ENCODE measurements at regions of chr11 and their contacts with region 1.

Region 1: GRCh38 chr11:57741132-57742086 is at the start of gene SELENOH:
- DNase-seq: peak; percentile 98
- H3K4me3 Mint-ChIP-seq: peak within 1 kb of the TSS; percentile 97
- H3K27ac Mint-ChIP-seq: peak within 1 kb of the TSS; percentile 99
- H3K4me1 Mint-ChIP-seq: peaks cover 40% of the 10 kb centered on the region
- H3K27me3 Mint-ChIP-seq: no peaks in the 10 kb centered on the region
- total RNA-seq, gene SELENOH: 235 to 252 TPM

Region 2: GRCh38 chr11:57324886-57325734 is 416.3 kb before region 1 on chr11 and contains the start of gene TNKS1BP1:
- CTCF ChIA-PET with region 1: no interaction called
- POLR2A ChIA-PET with region 1: no interaction called
- intact Hi-C with region 1: loop called (anchors 5 kb)
- DNase-seq: peak; percentile 95
- H3K4me3 Mint-ChIP-seq: peak within 1 kb of the TSS; percentile 79
- H3K27ac Mint-ChIP-seq: peak within 1 kb of the TSS; percentile 95
- H3K4me1 Mint-ChIP-seq: peaks cover 42% of the 10 kb centered on the region
- H3K27me3 Mint-ChIP-seq: no peaks in the 10 kb centered on the region
- total RNA-seq, gene TNKS1BP1: 14.0 to 15.1 TPM

Region 3: GRCh38 chr11:57567515-57568329 is 173.7 kb before region 1 on chr11 and contains the start of gene UBE2L6:
- CTCF ChIA-PET with region 1: no interaction called
- POLR2A ChIA-PET with region 1: no interaction called
- intact Hi-C with region 1: loop called (anchors 1 kb)
- DNase-seq: peak; percentile 70
- H3K4me3 Mint-ChIP-seq: peak within 1 kb of the TSS; percentile 92
- H3K27ac Mint-ChIP-seq: peak within 1 kb of the TSS; percentile 98
- H3K4me1 Mint-ChIP-seq: peaks cover 31% of the 10 kb centered on the region
- H3K27me3 Mint-ChIP-seq: no peaks in the 10 kb centered on the region
- total RNA-seq, gene UBE2L6: 152 to 162 TPM

Region 4: DNA sequence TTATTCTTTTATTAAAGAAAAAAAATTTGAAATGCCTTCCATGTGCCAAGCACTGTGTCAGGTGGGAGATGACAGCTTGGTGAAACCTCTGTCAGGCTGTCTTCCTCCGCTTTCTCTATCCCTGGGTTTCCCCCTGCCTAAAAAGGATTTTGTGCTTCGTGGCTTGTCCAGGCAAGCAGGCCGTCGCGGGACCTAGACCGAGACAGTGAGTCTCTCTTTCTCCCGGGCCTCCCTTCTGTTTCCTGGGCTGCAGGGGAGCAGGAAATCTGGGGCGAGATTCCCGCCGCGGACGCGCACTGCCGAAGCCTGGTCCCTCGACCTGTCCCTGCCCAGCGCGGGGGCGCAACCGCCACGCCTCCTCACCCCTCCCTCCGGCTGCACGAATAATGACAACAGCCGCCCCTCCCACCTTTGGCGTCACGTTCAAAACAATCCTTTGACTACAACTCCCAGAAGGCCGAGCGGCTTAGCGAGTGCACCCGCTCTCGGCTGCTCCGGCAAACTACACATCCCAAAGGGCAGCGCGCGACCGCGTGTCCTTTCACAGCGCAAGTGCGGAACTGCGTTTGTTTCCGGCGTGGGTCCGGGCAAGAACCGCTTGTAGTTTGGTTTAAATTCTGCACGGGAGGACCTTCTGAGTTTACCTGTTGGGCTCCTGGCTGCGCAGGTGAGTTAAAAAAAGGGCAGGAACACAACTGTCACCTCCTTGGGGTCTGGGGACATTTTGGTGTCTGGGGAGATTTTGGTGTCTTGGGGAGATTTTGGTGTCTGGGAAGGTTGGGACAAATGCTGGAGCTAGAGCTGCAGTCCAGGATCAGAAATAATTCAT is 84.0 kb before region 1 on chr11 and contains the start of gene CLP1:
- CTCF ChIA-PET with region 1: no interaction called
- POLR2A ChIA-PET with region 1: no interaction called
- intact Hi-C with region 1: loop called (anchors 1 kb)
- DNase-seq: peak; percentile 100
- H3K4me3 Mint-ChIP-seq: peak within 1 kb of the TSS; percentile 100
- H3K27ac Mint-ChIP-seq: peak within 1 kb of the TSS; percentile 94
- H3K4me1 Mint-ChIP-seq: peaks cover 33% of the 10 kb centered on the region
- H3K27me3 Mint-ChIP-seq: no peaks in the 10 kb centered on the region
- total RNA-seq, gene CLP1: 13.9 to 15.2 TPM

Region 5: DNA sequence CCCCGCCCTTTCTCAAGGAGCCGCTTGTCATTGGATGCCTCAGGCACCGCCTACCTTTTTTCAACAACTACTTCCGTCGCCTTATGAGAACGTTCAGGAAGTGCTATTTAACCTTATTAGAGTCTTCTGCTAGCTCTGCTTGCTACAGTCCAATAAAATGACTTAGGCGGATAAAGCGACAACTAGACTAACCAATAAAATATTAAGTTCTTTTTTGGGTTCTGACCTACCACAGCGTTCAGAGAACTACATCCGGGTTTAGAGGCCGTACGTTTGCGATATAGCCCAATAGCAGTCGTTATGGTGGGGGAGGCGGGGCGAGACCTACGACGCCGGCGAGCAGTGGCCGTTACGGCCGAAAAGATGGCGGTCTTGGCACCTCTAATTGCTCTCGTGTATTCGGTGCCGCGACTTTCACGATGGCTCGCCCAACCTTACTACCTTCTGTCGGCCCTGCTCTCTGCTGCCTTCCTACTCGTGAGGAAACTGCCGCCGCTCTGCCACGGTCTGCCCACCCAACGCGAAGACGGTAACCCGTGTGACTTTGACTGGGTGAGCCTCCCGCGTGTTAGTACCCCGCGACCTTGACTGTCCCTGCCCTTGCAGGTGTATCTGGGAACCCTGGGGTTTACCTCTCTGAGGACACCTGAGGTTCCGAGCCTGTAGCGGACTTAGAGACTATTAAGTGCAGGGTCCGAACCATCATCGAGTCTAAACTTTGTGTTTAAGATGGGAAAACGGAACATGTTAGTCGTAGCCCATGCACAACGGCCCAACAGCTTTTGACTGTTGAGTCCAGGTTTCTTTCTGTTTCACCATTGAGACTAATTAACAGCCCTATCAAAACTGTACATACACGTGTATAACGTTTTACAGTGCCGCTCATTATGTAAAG is 28.9 kb before region 1 on chr11 and contains the start of gene TMX2:
- CTCF ChIA-PET with region 1: interaction called, 5 read pairs
- POLR2A ChIA-PET with region 1: interaction called, 12 read pairs
- intact Hi-C with region 1: loop called (anchors 1 kb)
- DNase-seq: peak; percentile 94
- H3K4me3 Mint-ChIP-seq: peak within 1 kb of the TSS; percentile 94
- H3K27ac Mint-ChIP-seq: peak within 1 kb of the TSS; percentile 89
- H3K4me1 Mint-ChIP-seq: peaks cover 53% of the 10 kb centered on the region
- H3K27me3 Mint-ChIP-seq: no peaks in the 10 kb centered on the region
- total RNA-seq, gene TMX2: 54.9 to 57.2 TPM

Region 6: DNA sequence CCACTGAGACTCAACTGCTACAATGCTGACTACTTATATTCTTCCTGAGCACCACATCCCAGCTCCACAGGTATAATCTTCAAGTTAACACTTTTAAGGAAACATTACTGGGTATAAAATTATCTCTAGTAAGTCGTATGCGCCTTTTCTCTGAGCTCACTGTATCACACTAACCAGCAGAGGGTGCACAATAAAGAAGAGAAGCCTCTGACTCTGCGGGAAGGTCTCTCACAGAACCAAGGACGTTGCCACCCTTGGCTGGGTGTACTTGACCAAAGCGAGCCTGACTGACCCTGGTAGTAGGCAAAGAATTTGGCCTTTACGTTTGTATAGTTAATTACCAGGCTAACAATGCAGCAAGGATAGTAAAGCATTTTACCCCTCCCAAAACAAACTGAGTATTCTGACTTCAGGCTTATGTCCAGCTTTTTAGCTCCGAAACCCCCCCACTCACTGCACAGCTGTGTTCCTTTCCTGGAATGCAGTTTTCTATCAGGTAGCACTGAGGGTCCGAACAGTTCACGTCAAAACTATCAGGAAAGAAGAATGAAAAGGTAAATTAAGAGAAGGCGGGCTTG is 10.4 kb after region 1 on chr11 and contains the start of gene BTBD18:
- CTCF ChIA-PET with region 1: interaction called, 4 read pairs
- POLR2A ChIA-PET with region 1: interaction called, 12 read pairs
- intact Hi-C with region 1: no loop called
- DNase-seq: no peak
- H3K4me3 Mint-ChIP-seq: no peak within 1 kb of the TSS
- H3K27ac Mint-ChIP-seq: no peak within 1 kb of the TSS
- H3K4me1 Mint-ChIP-seq: peaks cover 5% of the 10 kb centered on the region
- H3K27me3 Mint-ChIP-seq: no peaks in the 10 kb centered on the region
- total RNA-seq, gene BTBD18: not detected

Region 7: DNA sequence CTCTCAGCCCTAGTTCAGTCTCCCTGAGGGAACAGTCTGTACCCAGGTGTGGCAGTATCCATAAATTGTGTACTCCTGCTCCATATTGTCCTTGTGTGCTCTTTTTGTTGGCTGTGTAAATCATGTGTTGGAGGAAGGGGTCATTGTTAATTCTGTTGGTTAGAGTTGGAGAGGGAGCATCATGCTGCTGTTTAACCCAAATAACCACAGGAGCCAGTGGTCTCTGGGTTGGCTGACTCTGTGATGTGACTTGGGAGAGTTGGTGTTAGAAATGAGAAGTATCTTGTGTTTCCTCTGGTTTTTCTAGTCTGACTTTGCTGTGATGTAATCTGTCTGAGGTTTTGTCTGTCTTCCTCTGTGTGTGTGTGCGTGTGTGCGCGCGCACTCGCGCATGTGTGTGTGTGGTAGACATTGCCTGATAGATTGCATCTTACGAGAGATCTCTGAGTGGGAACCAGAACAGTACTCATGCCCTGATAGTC is 50.7 kb after region 1 on chr11:
- CTCF ChIA-PET with region 1: interaction called, 3 read pairs
- POLR2A ChIA-PET with region 1: interaction called, 3 read pairs
- intact Hi-C with region 1: loop called (anchors 1 kb)
- DNase-seq: peak; percentile 90
- H3K4me3 Mint-ChIP-seq: peak overlapping the region; percentile 55
- H3K27ac Mint-ChIP-seq: peak overlapping the region; percentile 86
- H3K4me1 Mint-ChIP-seq: peaks cover 34% of the 10 kb centered on the region
- H3K27me3 Mint-ChIP-seq: peaks cover 1% of the 10 kb centered on the region

Region 8: GRCh38 chr11:57815476-57815875 is 74.1 kb after region 1 on chr11:
- CTCF ChIA-PET with region 1: no interaction called
- POLR2A ChIA-PET with region 1: no interaction called
- intact Hi-C with region 1: no loop called
- DNase-seq: no peak
- H3K4me3 Mint-ChIP-seq: no peak overlapping the region
- H3K27ac Mint-ChIP-seq: no peak overlapping the region
- H3K4me1 Mint-ChIP-seq: peaks cover 9% of the 10 kb centered on the region
- H3K27me3 Mint-ChIP-seq: no peaks in the 10 kb centered on the region

Region 9: GRCh38 chr11:57873196-57873911 is 131.9 kb after region 1 on chr11:
- CTCF ChIA-PET with region 1: no interaction called
- POLR2A ChIA-PET with region 1: no interaction called
- intact Hi-C with region 1: no loop called
- DNase-seq: no peak
- H3K4me3 Mint-ChIP-seq: no peak overlapping the region
- H3K27ac Mint-ChIP-seq: no peak overlapping the region
- H3K4me1 Mint-ChIP-seq: no peaks in the 10 kb centered on the region
- H3K27me3 Mint-ChIP-seq: peaks cover 8% of the 10 kb centered on the region